ENCODE measurements at regions of chr11 and their contacts with region 1.

Region 1: GRCh38 chr11:74739546-74740270 is 8.5 kb upstream of the CHRDL2 start:
- DNase-seq: peak; percentile 44
- H3K4me3 Mint-ChIP-seq: no peak overlapping the region
- H3K27ac Mint-ChIP-seq: no peak overlapping the region
- H3K4me1 Mint-ChIP-seq: peaks cover 3% of the 10 kb centered on the region
- H3K27me3 Mint-ChIP-seq: peaks cover 35% of the 10 kb centered on the region

Region 2: DNA sequence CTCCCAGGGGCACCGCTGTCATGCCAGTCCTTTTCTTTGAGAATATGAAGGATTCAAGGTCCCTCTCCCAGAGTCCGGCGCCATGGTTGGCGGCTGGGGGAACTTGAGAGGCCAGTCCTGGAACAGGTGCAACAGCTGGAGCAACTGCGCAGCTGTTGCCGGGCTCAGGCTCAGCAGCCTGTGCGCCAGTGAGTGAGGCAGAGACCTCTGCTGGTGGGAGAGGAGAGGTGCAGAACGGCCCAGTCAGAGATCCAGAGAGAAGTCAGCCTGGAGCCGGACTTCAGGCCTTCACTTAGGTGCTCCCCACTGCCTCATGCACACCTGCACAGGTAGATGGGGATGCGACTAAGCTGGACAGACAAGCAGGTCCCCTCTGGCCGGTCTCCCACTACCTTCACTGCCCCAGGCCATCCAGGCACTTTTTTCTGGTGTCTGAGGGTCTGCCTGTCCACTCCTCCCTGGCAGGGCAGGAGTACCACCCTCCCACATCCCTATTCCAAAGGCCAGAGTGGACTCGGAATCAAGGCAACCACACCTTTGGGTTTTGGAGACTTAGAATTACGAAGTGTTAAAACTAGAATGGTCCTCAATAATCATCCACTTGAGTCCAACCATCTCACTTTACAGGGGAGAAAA is 13.0 kb before region 1 on chr11:
- CTCF ChIA-PET with region 1: interaction called, 34 read pairs
- POLR2A ChIA-PET with region 1: interaction called, 4 read pairs
- DNase-seq: peak; percentile 61
- H3K4me3 Mint-ChIP-seq: no peak overlapping the region
- H3K27ac Mint-ChIP-seq: no peak overlapping the region
- H3K4me1 Mint-ChIP-seq: peaks cover 3% of the 10 kb centered on the region
- H3K27me3 Mint-ChIP-seq: peaks cover 57% of the 10 kb centered on the region

Measured in activated CD4-positive, alpha-beta memory T cell treated with anti-CD3 and anti-CD28 coated beads, Interleukin-2, amount 10 ng/mL, durations not matched to agents 7 days and 5 days (primary cell).